ENCODE measurements at regions of chr12 and their contacts with region 1.

Region 1: DNA sequence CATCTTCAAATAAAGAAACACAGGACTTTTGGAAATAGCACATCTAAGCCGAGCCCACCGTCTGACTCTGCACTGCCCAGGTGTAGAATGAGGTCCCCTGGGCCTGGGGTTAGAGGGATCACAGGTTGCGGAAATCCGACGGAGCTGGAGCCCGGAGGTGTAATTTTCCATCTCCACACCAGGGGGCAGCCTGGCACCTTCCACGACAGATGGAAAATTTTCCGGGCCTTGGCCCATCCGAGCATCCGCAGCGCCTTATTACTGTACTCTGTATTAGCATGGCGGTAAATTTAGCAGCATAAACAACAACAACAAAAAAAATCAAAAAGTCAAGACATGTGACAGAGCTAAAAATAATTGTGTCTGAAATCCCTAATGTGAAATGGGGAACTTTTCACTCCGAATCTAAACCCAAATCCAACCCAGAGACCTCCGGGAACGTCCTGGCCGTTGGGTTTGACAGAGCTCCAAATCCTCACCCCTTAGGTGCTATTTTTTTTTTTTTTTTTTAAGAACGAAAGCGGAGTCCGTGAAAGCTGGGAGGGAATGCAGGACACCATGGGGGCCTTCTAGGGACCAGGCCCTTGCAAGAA is 93.9 kb downstream of the KSR2 start:
- DNase-seq: peak in 33 of 35 experiments; percentile 12 to 71 (median 41)
- ATAC-seq: peak; percentile 41 to 58 (median 52)
- H3K4me3 ChIP-seq: no peak overlapping the region
- H3K4me3 Mint-ChIP-seq: no peak overlapping the region
- H3K27ac ChIP-seq: no peak overlapping the region
- H3K27ac Mint-ChIP-seq: no peak overlapping the region
- H3K4me1 ChIP-seq: peaks cover 0 to 11% of the 10 kb centered on the region in 2 experiments
- H3K4me1 Mint-ChIP-seq: peaks cover 0 to 13% (median 10%) of the 10 kb centered on the region in 3 donors
- H3K27me3 ChIP-seq: peaks cover 7 to 24% of the 10 kb centered on the region in 2 experiments
- H3K27me3 Mint-ChIP-seq: peaks cover 18 to 30% of the 10 kb centered on the region in 2 donors

Region 2: GRCh38 chr12:117742721-117743120 is 132.2 kb before region 1 on chr12:
- CTCF ChIA-PET with region 1: no interaction called
- POLR2A ChIA-PET with region 1: no interaction called
- DNase-seq: no peak
- ATAC-seq: no peak
- H3K4me3 ChIP-seq: no peak overlapping the region
- H3K4me3 Mint-ChIP-seq: no peak overlapping the region
- H3K27ac ChIP-seq: no peak overlapping the region
- H3K27ac Mint-ChIP-seq: no peak overlapping the region
- H3K4me1 ChIP-seq: no peaks in the 10 kb centered on the region
- H3K4me1 Mint-ChIP-seq: no peaks in the 10 kb centered on the region
- H3K27me3 ChIP-seq: no peaks in the 10 kb centered on the region
- H3K27me3 Mint-ChIP-seq: peaks cover 0 to 4% of the 10 kb centered on the region in 2 donors

Region 3: DNA sequence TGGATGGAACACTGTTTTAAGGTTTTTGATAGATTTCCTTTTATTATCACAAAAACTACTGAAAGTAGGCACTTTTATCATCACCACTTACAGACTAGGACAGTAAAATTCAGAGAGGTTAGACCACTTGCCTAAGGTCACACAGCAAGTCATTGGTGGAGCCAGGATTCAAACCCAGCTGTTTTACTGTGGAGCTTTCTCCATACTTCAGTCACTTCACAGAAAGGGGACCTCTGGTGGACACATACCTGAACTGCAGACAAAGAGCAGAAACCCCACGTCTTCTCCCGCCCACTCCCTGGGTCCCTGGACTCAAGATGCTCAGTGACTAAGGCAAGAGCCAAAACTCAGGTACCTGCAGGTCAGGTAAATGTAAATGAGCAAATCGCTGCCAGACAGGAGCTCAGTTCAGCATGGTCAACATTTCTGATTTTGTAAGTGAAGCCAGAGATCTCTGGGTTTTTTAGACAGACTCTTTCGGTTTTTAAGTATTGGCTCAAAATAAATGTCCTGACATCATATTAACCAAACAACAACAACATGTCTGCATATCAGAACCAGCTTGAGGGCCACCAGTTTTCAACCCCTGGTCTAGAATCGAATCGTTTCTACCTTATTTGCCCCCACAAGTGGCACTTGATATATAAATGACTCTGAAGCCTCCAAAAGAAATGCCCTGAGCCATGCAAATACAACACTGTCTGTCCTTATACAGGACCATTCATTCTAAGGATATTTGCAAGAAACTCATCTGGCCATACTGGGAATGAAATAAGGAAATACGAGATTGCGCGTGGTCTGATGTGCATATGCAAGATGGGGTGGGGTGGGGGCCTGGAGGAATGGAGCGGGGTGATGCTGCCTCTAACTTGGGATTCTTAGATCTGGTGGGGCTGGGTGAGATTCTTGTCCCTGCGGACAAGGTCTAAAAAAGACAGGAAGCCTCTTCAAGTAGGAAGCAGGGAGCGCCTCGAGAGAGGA is 17.0 kb before region 1 on chr12:
- CTCF ChIA-PET with region 1: interaction called, 7 to 11 read pairs
- POLR2A ChIA-PET with region 1: no interaction called
- DNase-seq: peak in 25 of 35 experiments; percentile 6 to 53 (median 24)
- ATAC-seq: peak in 3 of 4 experiments; percentile 9 to 43 (median 37)
- H3K4me3 ChIP-seq: no peak overlapping the region
- H3K4me3 Mint-ChIP-seq: no peak overlapping the region
- H3K27ac ChIP-seq: no peak overlapping the region
- H3K27ac Mint-ChIP-seq: no peak overlapping the region
- H3K4me1 ChIP-seq: no peaks in the 10 kb centered on the region
- H3K4me1 Mint-ChIP-seq: peaks cover 0 to 1% (median 0%) of the 10 kb centered on the region in 3 donors
- H3K27me3 ChIP-seq: peaks cover 0 to 3% of the 10 kb centered on the region in 2 experiments
- H3K27me3 Mint-ChIP-seq: peaks cover 0 to 4% of the 10 kb centered on the region in 2 donors

Measured in T-cell (primary cell).